ENCODE measurements at regions of chr4 and their contacts with region 1.

Region 1: DNA sequence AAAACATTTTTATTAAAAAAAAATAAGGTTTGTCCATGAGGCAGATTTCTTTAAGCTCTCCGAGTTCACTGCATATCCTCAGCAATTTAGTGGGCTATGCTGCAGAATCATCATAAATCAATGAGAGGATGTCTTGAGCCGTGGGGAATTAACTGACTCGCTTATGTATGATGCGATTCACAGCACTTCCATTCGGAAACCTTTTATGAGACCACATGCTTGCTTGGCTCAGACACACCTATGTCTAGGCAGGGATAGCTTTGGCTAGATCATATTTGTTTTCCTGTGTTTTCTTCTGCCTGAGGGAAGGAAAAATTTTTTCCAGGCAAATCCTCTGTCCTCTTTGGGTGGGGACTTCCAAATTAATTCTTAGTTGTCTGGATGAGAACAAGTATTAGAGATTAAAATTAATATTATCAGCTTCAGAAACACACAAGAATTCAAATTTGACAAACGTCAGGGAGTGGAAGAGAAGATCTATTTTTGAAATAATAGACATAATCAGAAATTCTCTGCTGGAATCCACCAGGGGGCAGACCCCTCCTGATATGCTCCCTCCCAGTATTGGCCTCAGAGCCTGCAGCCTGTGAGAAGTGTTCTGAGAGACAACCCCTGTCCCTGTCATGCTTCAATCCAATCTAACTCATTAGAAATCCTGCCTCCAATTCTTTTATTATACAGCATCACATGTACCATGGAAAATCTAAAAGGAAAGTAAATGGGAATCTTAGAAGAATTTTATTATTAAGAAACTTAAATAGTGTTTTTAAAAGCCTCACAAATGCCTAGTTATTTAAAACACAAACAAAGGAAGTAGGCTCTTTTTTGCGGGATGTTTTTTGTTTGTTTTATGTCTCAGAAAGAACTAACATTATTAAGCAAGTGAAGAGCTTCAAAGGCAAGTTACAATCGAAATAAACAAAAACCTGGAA is 345.1 kb upstream of the TACR3 start:
- DNase-seq: peak; percentile 44 to 63
- H3K4me3 ChIP-seq: no peak overlapping the region
- H3K4me3 Mint-ChIP-seq: no peak overlapping the region
- H3K27ac Mint-ChIP-seq: no peak overlapping the region
- H3K4me1 ChIP-seq: no peaks in the 10 kb centered on the region
- H3K4me1 Mint-ChIP-seq: no peaks in the 10 kb centered on the region
- H3K27me3 ChIP-seq: no peaks in the 10 kb centered on the region; the same call in 1 of the 2 replicates
- H3K27me3 Mint-ChIP-seq: peaks cover 3% of the 10 kb centered on the region
- CTCF ChIP-seq: peak; percentile 60 to 67

Region 2: DNA sequence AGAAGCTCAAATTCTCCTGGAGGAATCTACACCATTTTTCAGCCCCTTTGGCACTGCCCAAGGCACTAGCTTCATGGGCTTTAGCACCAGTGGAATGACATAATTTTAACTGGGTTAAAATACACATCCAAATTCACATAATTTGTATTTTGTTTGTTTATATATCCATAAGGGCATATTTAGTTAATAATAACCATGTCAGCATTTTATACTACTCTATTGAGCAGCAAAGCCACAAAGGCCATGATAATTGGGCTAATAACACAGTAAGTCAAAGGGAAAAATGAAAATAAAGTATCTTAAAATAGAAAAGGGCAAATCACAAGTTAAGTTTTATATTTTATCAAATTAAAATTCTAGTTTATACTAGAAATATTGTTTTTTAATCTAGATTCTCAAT is 82.5 kb before region 1 on chr4:
- CTCF ChIA-PET with region 1: no interaction called
- POLR2A ChIA-PET with region 1: no interaction called
- intact Hi-C with region 1: no loop called
- DNase-seq: no peak
- H3K4me3 ChIP-seq: no peak overlapping the region
- H3K4me3 Mint-ChIP-seq: no peak overlapping the region
- H3K27ac Mint-ChIP-seq: no peak overlapping the region
- H3K4me1 ChIP-seq: no peaks in the 10 kb centered on the region
- H3K4me1 Mint-ChIP-seq: no peaks in the 10 kb centered on the region
- H3K27me3 ChIP-seq: no peaks in the 10 kb centered on the region
- H3K27me3 Mint-ChIP-seq: peaks cover 3% of the 10 kb centered on the region
- CTCF ChIP-seq: no peak

Region 3: DNA sequence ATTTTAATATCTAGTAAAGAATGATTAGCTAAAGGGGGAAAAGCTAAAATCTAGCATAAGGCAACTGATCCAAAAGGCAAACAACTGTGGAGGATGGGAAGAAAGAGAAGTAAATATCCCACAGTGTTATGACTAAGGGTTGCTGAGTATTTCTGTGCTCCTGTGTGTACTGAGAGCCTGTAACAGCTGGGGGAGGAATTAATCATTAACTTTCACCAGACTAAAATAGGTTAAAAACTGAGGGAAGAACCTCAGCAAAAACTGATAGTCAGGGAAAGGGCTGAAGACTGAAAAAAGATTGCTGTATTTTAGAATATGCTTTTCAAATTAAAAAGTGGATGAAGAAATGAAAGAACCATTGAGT is 63.9 kb after region 1 on chr4:
- CTCF ChIA-PET with region 1: no interaction called
- POLR2A ChIA-PET with region 1: no interaction called
- intact Hi-C with region 1: loop called (anchors 2 kb)
- DNase-seq: peak in 1 of 2 experiments; percentile 49
- H3K4me3 ChIP-seq: no peak overlapping the region
- H3K4me3 Mint-ChIP-seq: peak overlapping the region; percentile 62
- H3K27ac Mint-ChIP-seq: no peak overlapping the region
- H3K4me1 ChIP-seq: peaks cover 16% of the 10 kb centered on the region
- H3K4me1 Mint-ChIP-seq: peaks cover 9% of the 10 kb centered on the region
- H3K27me3 ChIP-seq: no peaks in the 10 kb centered on the region
- H3K27me3 Mint-ChIP-seq: no peaks in the 10 kb centered on the region
- CTCF ChIP-seq: no peak

Region 4: DNA sequence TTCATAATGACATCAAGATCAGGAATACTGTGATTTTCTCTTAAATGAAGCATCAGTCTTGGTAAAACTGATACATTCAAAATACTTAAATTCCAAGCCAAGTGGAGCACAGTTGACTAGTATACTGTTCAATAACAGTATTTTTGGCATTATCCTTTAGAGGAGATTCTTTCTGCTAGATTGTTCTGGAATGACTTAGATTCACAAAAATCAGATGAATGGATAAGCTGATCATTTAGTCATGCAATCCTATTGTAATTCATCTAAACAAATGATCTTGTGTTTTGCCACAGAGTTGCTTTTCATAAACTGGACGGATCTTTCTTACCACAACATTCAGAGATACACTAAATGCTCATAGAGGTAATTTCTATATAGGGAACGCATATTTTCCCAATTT is 197.8 kb after region 1 on chr4:
- CTCF ChIA-PET with region 1: no interaction called
- POLR2A ChIA-PET with region 1: no interaction called
- intact Hi-C with region 1: no loop called
- DNase-seq: no peak
- H3K4me3 ChIP-seq: no peak overlapping the region
- H3K4me3 Mint-ChIP-seq: no peak overlapping the region
- H3K27ac Mint-ChIP-seq: no peak overlapping the region
- H3K4me1 ChIP-seq: no peaks in the 10 kb centered on the region
- H3K4me1 Mint-ChIP-seq: no peaks in the 10 kb centered on the region
- H3K27me3 ChIP-seq: no peaks in the 10 kb centered on the region
- H3K27me3 Mint-ChIP-seq: no peaks in the 10 kb centered on the region
- CTCF ChIP-seq: no peak

Region 5: DNA sequence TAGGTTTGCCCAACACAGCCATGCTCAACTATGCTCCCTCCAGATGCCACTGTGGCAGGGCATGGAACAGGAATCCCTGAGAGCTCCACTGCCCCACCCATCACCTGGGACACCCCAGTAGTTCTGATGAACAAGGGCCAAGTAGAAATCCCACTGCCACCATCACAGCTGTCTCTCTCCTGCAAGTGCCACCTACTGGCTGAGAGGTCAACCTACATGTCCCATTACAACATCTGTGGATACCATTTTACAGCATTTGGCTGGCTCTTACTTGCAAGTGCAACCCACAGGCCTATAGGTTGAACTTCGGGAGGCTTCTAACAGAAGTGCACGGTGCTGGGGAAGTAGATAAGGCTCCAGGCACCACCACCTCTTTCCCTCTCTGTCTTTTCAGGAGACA is 287.3 kb after region 1 on chr4:
- CTCF ChIA-PET with region 1: no interaction called
- POLR2A ChIA-PET with region 1: no interaction called
- intact Hi-C with region 1: loop called (anchors 1 kb)
- DNase-seq: no peak
- H3K4me3 ChIP-seq: no peak overlapping the region
- H3K4me3 Mint-ChIP-seq: no peak overlapping the region
- H3K27ac Mint-ChIP-seq: no peak overlapping the region
- H3K4me1 ChIP-seq: no peaks in the 10 kb centered on the region
- H3K4me1 Mint-ChIP-seq: no peaks in the 10 kb centered on the region
- H3K27me3 ChIP-seq: no peaks in the 10 kb centered on the region
- H3K27me3 Mint-ChIP-seq: no peaks in the 10 kb centered on the region
- CTCF ChIP-seq: peak; percentile 12 to 14

Region 6: DNA sequence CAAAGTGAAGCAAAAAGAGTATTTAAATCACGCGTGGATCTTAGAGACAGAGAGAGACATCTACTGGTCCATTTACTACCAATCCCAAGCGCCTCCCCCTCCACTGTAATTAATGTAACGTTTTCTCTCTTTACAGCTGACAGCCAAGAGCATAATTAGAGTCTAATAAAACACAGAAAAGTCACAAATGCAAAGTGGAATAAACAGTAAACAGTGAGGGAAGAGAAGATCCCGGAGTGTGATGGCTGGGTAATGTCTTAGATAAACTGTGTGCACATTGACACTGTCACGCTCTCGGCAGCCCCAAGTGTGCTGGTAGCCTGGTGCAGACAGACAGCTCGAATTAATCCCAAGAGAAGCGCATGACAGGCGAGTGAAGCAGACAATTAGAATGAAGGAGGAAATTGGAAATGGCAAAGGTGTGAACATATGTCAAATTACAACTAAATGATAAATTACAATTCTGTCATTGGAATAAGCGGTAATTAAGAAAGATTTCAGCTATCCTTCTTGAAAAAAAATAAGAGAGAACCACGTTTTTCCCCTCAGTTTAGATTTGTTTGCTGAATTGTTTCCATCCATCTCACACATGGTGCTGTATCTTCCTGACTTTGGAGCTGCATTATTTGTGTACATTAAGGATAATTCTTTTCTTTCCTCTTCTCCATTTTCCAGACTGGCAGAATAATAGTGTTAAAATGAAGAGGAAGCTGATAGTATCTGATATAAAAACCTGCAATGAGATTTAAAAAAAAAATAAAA is 329.7 kb after region 1 on chr4:
- CTCF ChIA-PET with region 1: no interaction called
- POLR2A ChIA-PET with region 1: no interaction called
- intact Hi-C with region 1: loop called (anchors 1 kb)
- DNase-seq: no peak
- H3K4me3 ChIP-seq: no peak overlapping the region
- H3K4me3 Mint-ChIP-seq: no peak overlapping the region
- H3K27ac Mint-ChIP-seq: no peak overlapping the region
- H3K4me1 ChIP-seq: no peaks in the 10 kb centered on the region
- H3K4me1 Mint-ChIP-seq: no peaks in the 10 kb centered on the region
- H3K27me3 ChIP-seq: no peaks in the 10 kb centered on the region
- H3K27me3 Mint-ChIP-seq: no peaks in the 10 kb centered on the region
- CTCF ChIP-seq: no peak

Region 7: GRCh38 chr4:104531390-104531789 is 466.5 kb after region 1 on chr4:
- CTCF ChIA-PET with region 1: no interaction called
- POLR2A ChIA-PET with region 1: no interaction called
- intact Hi-C with region 1: loop called (anchors 1 kb)
- DNase-seq: no peak
- H3K4me3 ChIP-seq: no peak overlapping the region
- H3K4me3 Mint-ChIP-seq: no peak overlapping the region
- H3K27ac Mint-ChIP-seq: no peak overlapping the region
- H3K4me1 ChIP-seq: no peaks in the 10 kb centered on the region
- H3K4me1 Mint-ChIP-seq: no peaks in the 10 kb centered on the region
- H3K27me3 ChIP-seq: no peaks in the 10 kb centered on the region
- H3K27me3 Mint-ChIP-seq: no peaks in the 10 kb centered on the region
- CTCF ChIP-seq: peak in 1 of 2 experiments; percentile 5